ENCODE measurements at regions of chr11 and their contacts with region 1.

Region 1: GRCh38 chr11:4187055-4187988 is 92.7 kb downstream of the RRM1 start:
- DNase-seq: peak; percentile 91
- CTCF ChIP-seq: peak; percentile 94

Region 2: GRCh38 chr11:4039011-4039410 is 148.3 kb before region 1 on chr11:
- CTCF ChIA-PET with region 1: no interaction called
- POLR2A ChIA-PET with region 1: no interaction called
- DNase-seq: no peak
- CTCF ChIP-seq: no peak

Region 3: DNA sequence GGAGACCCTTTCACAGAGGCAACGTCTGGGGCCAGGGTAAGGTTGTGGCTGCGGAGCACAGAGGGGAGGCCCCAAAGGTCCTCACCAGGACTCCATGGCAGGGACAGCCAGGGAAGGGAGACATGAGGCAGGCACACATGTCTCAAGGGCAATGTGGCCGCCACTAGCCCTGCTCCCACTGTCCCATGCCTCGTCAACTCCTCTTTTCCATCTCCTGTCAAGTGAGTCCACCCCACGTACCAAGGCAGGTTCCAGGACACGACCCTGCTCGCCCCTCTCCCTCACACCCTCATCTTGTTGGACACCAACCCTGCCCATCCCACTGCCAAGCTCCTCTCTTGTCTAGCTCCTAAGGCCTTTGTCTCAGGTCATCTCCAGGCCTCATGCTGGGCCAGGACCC is 19.6 kb before region 1 on chr11:
- CTCF ChIA-PET with region 1: interaction called, 15 read pairs
- POLR2A ChIA-PET with region 1: no interaction called
- DNase-seq: no peak
- CTCF ChIP-seq: no peak

Region 4: GRCh38 chr11:4203603-4204360 is 16.5 kb after region 1 on chr11:
- CTCF ChIA-PET with region 1: interaction called, 24 read pairs
- POLR2A ChIA-PET with region 1: no interaction called
- DNase-seq: no peak
- CTCF ChIP-seq: no peak

Region 5: GRCh38 chr11:4496557-4497275 is 309.4 kb after region 1 on chr11:
- CTCF ChIA-PET with region 1: interaction called, 164 read pairs
- POLR2A ChIA-PET with region 1: no interaction called
- DNase-seq: no peak
- CTCF ChIP-seq: no peak

Region 6: DNA sequence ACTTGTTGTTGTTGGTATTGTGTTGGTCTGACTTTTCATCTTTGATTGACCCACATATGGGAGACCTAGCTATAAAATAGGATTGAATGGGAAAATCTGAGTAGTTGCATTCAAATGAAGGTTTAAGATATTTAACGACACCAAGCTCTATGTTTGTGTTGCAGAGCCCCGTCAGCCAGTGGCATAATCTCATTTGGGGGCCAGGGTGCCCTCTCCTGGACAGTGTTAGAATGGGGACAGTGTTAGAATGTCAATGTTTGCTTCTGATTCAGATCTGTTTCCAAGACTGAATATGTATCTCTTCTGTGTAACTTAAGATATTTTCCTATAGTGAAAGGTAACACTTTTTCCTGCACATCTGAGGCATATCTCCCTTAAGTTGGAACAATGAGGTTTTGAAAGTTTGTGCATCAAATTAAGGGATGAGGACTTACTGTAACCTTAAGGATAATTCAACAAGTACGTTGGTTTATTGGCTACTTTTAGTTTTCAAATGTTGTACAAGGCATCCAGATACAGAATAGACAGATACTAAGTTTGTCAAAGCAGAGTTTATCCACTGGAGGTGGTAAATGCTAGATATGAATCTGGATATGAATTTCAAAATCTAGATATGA is 352.4 kb after region 1 on chr11:
- CTCF ChIA-PET with region 1: interaction called, 169 read pairs
- POLR2A ChIA-PET with region 1: no interaction called
- DNase-seq: peak; percentile 36
- CTCF ChIP-seq: peak; percentile 73

Region 7: GRCh38 chr11:4551346-4551979 is 364.1 kb after region 1 on chr11:
- CTCF ChIA-PET with region 1: interaction called, 25 read pairs
- POLR2A ChIA-PET with region 1: no interaction called
- DNase-seq: peak; percentile 25
- CTCF ChIP-seq: no peak

Measured in GM10248 (cell line).